ENCODE measurements at regions of chr18 and their contacts with region 1.

Region 1: DNA sequence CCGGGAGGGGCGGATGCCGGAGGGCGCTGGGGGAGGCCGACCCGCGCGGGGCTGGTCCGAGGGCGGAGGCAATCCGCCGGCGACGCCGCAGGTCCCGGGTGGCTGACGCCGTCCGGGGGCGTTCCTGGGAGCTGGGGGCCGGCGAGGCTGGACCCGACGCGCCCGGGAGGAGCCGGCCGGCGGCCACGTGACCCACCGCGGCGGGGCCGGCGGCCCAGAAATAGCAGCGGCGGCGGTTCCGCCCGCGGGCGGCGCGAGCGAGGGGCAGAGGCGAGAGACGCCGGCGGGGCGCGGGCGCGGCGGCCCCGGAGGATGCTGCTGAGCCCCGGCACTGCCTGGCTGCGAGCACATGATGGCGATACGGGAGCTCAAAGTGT is at the start of gene RAB31:
- DNase-seq: no peak
- ATAC-seq: peak; percentile 31
- H3K4me3 ChIP-seq: peak within 1 kb of the TSS; percentile 91
- H3K27ac ChIP-seq: peak within 1 kb of the TSS; percentile 47
- H3K4me1 ChIP-seq: peaks cover 44% of the 10 kb centered on the region
- H3K27me3 ChIP-seq: peaks cover 2 to 10% of the 10 kb centered on the region in 2 experiments
- CTCF ChIP-seq: 0 out of 6 replicates have a peak, but pooled peaks of 1 of the 3 experiments have one; percentile 6
- EP300 ChIP-seq: no peak
- POLR2A ChIP-seq: peak; percentile 60; the same call in 1 of the 2 replicates
- RAD21 ChIP-seq: no peak
- polyA plus RNA-seq, gene RAB31: 6.4 to 8.9 TPM

Region 2: GRCh38 chr18:9673296-9674251 is 34.5 kb before region 1 on chr18:
- CTCF ChIA-PET with region 1: no interaction called
- POLR2A ChIA-PET with region 1: no interaction called
- RAD21 ChIA-PET with region 1: no interaction called
- SMC1A ChIA-PET with region 1: no interaction called
- in situ Hi-C with region 1: no loop called
- intact Hi-C with region 1: loop called (anchors 1 kb)
- DNase-seq: peak; percentile 99
- ATAC-seq: peak; percentile 98
- H3K4me3 ChIP-seq: no peak overlapping the region
- H3K27ac ChIP-seq: peak overlapping the region; percentile 33
- H3K4me1 ChIP-seq: peaks cover 9% of the 10 kb centered on the region
- H3K27me3 ChIP-seq: no peaks in the 10 kb centered on the region
- CTCF ChIP-seq: peak; percentile 34 to 56 (median 55); a peak in 5 of 6 replicates
- EP300 ChIP-seq: peak; percentile 92 to 93
- POLR2A ChIP-seq: no peak
- RAD21 ChIP-seq: peak; percentile 81